Heart left ventricle (tissue), 16 donors: ENCODE measurements at regions of chr9 and their contacts with region 1.

Region 1: GRCh38 chr9:27407986-27408385 is 111.0 kb upstream of the EQTN start:
- DNase-seq: no peak
- ATAC-seq: peak in 1 of 4 donors; percentile 22
- H3K4me3 ChIP-seq: no peak overlapping the region
- H3K27ac ChIP-seq: peak overlapping the region in 1 of 12 donors; percentile 6
- H3K4me1 ChIP-seq: peaks cover 0 to 24% (median 6%) of the 10 kb centered on the region in 12 donors
- H3K27me3 ChIP-seq: no peaks in the 10 kb centered on the region
- CTCF ChIP-seq: no peak
- POLR2A ChIP-seq: no peak

Region 2: GRCh38 chr9:27333241-27334052 is 74.5 kb before region 1 on chr9:
- intact Hi-C with region 1: no loop called
- DNase-seq: peak in 4 of 5 donors; percentile 51 to 64 (median 58)
- ATAC-seq: peak; percentile 89 to 97 (median 90)
- H3K4me3 ChIP-seq: no peak overlapping the region
- H3K27ac ChIP-seq: no peak overlapping the region
- H3K4me1 ChIP-seq: peaks cover 0 to 17% (median 7%) of the 10 kb centered on the region in 12 donors
- H3K27me3 ChIP-seq: no peaks in the 10 kb centered on the region
- CTCF ChIP-seq: peak; percentile 83 to 93 (median 90)
- POLR2A ChIP-seq: no peak

Region 3: DNA sequence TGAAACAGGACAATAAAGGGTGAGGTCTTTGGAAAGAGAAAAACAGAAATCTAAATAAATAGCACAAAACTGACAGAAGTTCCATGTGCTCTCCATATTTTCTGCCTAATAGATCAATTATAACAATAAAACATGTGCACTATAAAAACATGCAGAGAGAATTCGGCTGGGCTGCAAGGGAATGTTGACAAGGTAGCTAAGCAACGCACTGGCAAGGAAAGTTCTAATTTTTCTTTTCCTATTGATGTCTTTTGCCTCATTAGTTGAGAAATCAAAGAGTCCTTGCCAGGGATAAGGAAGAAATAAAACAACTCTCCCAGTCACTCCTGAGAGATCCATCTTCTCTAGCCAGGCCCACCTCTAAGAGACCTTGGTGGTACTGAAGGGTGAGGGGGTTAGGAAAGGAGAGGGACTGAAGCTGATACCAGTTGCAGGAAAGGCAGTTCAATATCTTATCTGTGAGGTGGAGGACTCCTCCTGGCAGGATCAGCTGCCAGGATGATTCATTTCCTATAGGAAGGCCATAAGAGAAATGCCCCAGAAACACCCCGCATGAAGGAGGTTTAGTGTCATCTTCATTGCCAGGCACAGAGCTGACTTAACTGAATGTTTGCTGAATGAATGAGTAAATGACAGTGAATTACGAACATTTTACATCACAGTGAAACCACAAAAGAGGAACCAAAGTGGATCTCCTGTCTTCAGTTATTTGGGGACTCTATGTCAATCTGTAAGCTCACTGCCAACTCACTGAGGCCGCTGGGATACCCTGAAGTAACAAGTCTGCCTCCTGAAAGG is 52.4 kb after region 1 on chr9:
- intact Hi-C with region 1: loop called in 2 of 10 experiments (anchors 10 kb)
- DNase-seq: peak in 1 of 5 donors; percentile 38
- ATAC-seq: peak; percentile 45 to 68 (median 53)
- H3K4me3 ChIP-seq: no peak overlapping the region
- H3K27ac ChIP-seq: no peak overlapping the region
- H3K4me1 ChIP-seq: peaks cover 0 to 31% (median 13%) of the 10 kb centered on the region in 12 donors
- H3K27me3 ChIP-seq: no peaks in the 10 kb centered on the region
- CTCF ChIP-seq: no peak
- POLR2A ChIP-seq: no peak